Activated naive CD4-positive, alpha-beta T cell treated with anti-CD3 and anti-CD28 coated beads for 36 hours (primary cell): ENCODE measurements at regions of chr4 and their contacts with region 1.

Region 1: DNA sequence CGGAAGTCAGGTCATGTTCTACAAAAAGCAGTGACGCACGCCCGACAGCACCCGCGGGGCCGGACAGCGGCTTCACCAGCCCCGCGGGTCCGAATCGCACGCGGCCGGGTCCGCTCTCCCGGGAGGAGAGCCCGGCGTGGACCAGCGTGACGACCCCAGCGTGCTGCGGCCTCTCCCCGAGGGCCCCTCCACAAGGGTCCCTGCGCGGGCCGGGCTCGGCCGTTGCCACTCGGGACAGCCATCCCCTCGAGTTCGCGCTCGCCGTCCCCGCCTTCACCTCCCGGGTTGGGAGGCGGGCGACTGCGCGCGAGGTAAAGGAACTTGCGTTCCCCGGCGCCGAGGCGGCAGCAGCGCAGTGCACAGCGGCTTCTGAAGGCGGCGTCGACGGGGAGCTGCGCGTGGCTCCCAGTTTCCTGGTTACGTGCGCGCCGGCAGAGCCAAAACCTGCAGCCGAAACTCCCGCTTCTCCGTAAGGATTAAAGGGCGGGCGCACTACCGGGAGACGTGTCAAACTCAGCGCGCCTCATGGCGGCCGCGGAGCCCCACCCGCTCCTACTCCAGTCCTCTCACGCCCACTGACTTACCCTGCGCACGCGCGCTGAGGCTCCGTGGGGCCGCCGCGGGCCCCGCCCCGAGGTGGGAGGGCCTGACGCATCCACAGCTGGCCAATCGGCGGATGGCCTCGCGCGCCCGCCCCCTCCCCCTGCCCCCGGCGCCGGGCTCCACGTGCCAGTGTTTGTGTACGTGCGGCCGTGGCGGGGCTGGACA is 416 bp upstream of the LRP2BP start:
- DNase-seq: peak; percentile 95
- H3K4me3 Mint-ChIP-seq: peak overlapping the region; percentile 93
- H3K27ac Mint-ChIP-seq: peak overlapping the region; percentile 98
- H3K4me1 Mint-ChIP-seq: peaks cover 42% of the 10 kb centered on the region
- H3K27me3 Mint-ChIP-seq: no peaks in the 10 kb centered on the region

Region 2: GRCh38 chr4:184649026-184649970 is 746.8 kb before region 1 on chr4 and contains the starts of genes CASP3 and PRIMPOL:
- CTCF ChIA-PET with region 1: no interaction called
- intact Hi-C with region 1: loop called (anchors 1 kb)
- DNase-seq: peak; percentile 97
- H3K4me3 Mint-ChIP-seq: peak within 1 kb of the TSS; percentile 93
- H3K27ac Mint-ChIP-seq: peak within 1 kb of the TSS; percentile 90
- H3K4me1 Mint-ChIP-seq: peaks cover 50% of the 10 kb centered on the region
- H3K27me3 Mint-ChIP-seq: no peaks in the 10 kb centered on the region
- total RNA-seq, gene CASP3: 27.5 to 27.9 TPM
- total RNA-seq, gene PRIMPOL: 17.9 to 18.1 TPM

Region 3: GRCh38 chr4:185203486-185204237 is 192.5 kb before region 1 on chr4 and contains the start of gene CFAP97:
- CTCF ChIA-PET with region 1: no interaction called
- intact Hi-C with region 1: loop called (anchors 1 kb)
- DNase-seq: peak; percentile 73
- H3K4me3 Mint-ChIP-seq: peak within 1 kb of the TSS; percentile 96
- H3K27ac Mint-ChIP-seq: peak within 1 kb of the TSS; percentile 96
- H3K4me1 Mint-ChIP-seq: peaks cover 32% of the 10 kb centered on the region
- H3K27me3 Mint-ChIP-seq: no peaks in the 10 kb centered on the region
- total RNA-seq, gene CFAP97: 38.4 to 43.6 TPM

Region 4: GRCh38 chr4:185318679-185319078 is 77.5 kb before region 1 on chr4:
- CTCF ChIA-PET with region 1: no interaction called
- intact Hi-C with region 1: loop called (anchors 2 kb)
- DNase-seq: no peak
- H3K4me3 Mint-ChIP-seq: no peak overlapping the region
- H3K27ac Mint-ChIP-seq: no peak overlapping the region
- H3K4me1 Mint-ChIP-seq: peaks cover 8% of the 10 kb centered on the region
- H3K27me3 Mint-ChIP-seq: no peaks in the 10 kb centered on the region

Region 5: DNA sequence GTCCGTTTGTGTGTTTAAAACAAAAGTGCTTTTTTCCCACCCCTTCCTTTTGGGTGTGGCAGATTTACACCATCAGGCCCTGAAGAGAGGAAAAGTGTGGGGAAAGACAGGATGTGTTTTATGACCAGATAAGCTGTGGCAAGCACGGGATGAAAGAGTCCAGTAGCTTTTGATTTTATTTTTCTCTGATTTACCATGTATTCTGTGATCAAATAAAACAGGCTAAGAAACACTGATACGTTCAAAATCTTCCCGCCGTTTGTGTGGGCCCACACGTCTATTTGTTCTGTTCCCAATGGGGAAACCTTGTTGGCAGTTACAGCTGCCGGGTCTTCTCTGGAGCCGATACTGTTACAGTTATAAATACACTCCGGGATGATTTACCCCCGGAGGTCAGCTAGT is 11.2 kb before region 1 on chr4:
- CTCF ChIA-PET with region 1: no interaction called
- intact Hi-C with region 1: no loop called
- DNase-seq: no peak
- H3K4me3 Mint-ChIP-seq: no peak overlapping the region
- H3K27ac Mint-ChIP-seq: no peak overlapping the region
- H3K4me1 Mint-ChIP-seq: peaks cover 11% of the 10 kb centered on the region
- H3K27me3 Mint-ChIP-seq: peaks cover 24% of the 10 kb centered on the region

Region 6: DNA sequence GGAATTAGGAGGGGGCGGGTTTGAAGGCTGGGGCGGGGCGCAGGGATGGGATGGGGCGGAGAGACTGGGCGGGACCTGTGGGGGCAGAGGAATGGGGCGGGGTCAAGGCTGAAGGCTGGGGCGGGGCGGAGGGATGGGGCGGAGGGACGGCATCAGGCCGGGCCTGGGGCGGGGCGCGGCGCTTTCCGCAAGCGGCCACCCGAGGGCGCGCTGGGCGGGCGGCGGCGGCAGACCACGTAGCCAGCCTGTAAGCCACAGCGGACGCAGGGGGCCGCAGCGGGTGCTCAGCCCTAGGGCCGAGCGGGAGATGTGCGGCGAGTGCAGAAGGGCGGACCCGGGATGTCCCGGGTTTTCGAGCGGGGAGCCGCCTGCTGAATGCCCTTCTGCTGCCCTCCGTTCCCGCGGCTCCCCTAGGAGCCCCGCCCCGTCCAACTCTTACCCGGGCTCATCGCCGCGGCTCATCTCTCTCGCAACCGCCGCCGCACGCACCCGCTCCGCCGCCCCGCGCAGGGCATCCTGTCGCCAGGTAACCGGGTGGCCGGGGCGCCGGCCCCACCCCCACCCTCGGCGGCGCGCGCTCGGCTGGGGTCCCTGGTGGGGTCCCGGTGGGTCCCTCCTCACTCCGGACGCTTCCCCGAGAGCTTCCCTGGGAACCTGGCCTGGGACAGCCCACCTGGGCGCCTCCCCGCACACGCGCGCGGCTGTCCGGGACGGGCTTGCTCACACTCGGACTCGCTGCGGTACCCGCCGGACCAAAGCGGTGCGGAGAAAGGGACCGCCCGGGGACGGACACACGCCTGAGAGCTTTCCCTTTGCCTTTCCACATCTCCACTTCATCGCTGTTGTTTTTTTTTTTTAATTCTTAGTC is 75.3 kb after region 1 on chr4 and contains the start of gene CCDC110:
- CTCF ChIA-PET with region 1: interaction called, 3 read pairs
- intact Hi-C with region 1: loop called (anchors 1 kb)
- DNase-seq: peak; percentile 93
- H3K4me3 Mint-ChIP-seq: peak within 1 kb of the TSS; percentile 84
- H3K27ac Mint-ChIP-seq: peak within 1 kb of the TSS; percentile 26
- H3K4me1 Mint-ChIP-seq: peaks cover 2% of the 10 kb centered on the region
- H3K27me3 Mint-ChIP-seq: peaks cover 4% of the 10 kb centered on the region
- total RNA-seq, gene CCDC110: 0.25 to 0.57 TPM

Region 7: DNA sequence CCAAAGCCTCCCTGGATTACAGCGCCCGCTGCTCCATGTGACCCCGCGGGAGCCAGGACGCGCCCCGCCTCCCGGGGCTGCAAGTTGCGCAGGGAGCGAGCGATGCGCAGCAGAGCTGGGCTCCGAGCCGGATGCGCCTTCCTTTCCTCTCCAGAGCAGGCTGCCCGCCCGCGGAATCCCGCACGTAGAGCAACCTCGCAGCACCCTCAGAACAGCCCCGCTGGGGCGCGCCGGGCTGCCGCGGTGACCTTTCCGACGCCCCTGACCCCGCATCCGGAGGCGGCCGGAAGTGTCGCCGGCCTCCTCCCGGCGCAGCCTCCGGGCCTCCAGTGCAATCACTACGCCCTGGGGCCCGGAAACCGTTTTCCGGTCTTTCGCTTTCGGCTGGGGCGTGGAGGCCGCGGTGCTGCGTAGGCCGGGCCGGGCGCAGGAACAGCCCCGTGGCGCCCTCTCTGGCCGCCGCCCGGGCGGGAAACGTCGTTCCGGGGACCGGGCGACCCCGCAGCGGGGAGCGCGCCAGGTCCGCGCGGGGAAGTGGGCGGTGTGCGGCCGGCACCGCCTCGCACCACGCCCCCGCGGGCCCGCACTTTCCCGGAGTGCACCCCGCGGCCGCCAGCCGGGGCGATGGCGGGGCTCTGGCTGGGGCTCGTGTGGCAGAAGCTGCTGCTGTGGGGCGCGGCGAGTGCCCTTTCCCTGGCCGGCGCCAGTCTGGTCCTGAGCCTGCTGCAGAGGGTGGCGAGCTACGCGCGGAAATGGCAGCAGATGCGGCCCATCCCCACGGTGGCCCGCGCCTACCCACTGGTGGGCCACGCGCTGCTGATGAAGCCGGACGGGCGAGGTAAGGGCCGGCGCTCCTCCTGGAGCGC is 795.3 kb after region 1 on chr4 and contains the start of gene CYP4V2:
- CTCF ChIA-PET with region 1: no interaction called
- intact Hi-C with region 1: loop called (anchors 2 kb)
- DNase-seq: peak; percentile 88
- H3K4me3 Mint-ChIP-seq: peak within 1 kb of the TSS; percentile 86
- H3K27ac Mint-ChIP-seq: peak within 1 kb of the TSS; percentile 92
- H3K4me1 Mint-ChIP-seq: peaks cover 33% of the 10 kb centered on the region
- H3K27me3 Mint-ChIP-seq: no peaks in the 10 kb centered on the region
- total RNA-seq, gene CYP4V2: 3.3 TPM